Heart right ventricle (tissue), 16 donors: ENCODE measurements at regions of chr1 and their contacts with region 1.

Region 1: GRCh38 chr1:166875734-166876539 is at the start of gene TADA1:
- DNase-seq: peak; percentile 97 to 98
- ATAC-seq: peak; percentile 95 to 99 (median 98)
- H3K4me3 ChIP-seq: peak within 1 kb of the TSS; percentile 65 to 96 (median 85)
- H3K27ac ChIP-seq: peak within 1 kb of the TSS; percentile 90 to 96 (median 92)
- H3K4me1 ChIP-seq: peaks cover 1 to 40% (median 30%) of the 10 kb centered on the region in 9 donors
- H3K27me3 ChIP-seq: no peaks in the 10 kb centered on the region
- CTCF ChIP-seq: peak in 4 of 9 donors; percentile 16 to 55 (median 40)
- total RNA-seq, gene TADA1: 7.5 to 12.8 (median 9.2) TPM

Region 2: DNA sequence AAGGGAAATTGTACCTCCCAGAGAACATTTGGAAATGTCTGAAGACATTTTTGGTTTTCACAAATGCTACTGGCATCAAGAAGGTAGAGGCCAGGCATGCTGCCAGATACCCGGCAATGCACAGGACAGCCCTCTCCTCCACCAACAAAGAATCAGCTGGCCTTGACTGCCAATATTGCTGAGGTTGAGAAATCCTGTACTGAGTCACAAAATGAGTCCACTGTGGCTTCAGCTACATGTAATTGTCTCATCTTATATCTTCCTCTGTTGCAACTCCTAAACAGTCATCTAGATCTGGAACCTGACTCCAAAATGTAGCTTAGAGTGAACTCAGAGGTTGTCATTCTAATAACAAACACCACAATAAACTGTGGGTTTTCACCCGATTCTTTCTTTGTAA is 364.2 kb before region 1 on chr1:
- intact Hi-C with region 1: no loop called
- DNase-seq: no peak
- ATAC-seq: no peak
- H3K4me3 ChIP-seq: no peak overlapping the region
- H3K27ac ChIP-seq: no peak overlapping the region
- H3K4me1 ChIP-seq: no peaks in the 10 kb centered on the region
- H3K27me3 ChIP-seq: peaks cover 0 to 3% (median 0%) of the 10 kb centered on the region in 7 donors
- CTCF ChIP-seq: no peak

Region 3: GRCh38 chr1:166838766-166839599 is 37.0 kb before region 1 on chr1 and contains the start of gene POGK:
- intact Hi-C with region 1: loop called in 5 of 10 experiments (anchors 1 to 5 kb)
- DNase-seq: peak; percentile 92 to 93
- ATAC-seq: peak; percentile 95 to 99 (median 97)
- H3K4me3 ChIP-seq: peak within 1 kb of the TSS; percentile 44 to 84 (median 71)
- H3K27ac ChIP-seq: peak within 1 kb of the TSS; percentile 79 to 95 (median 90)
- H3K4me1 ChIP-seq: peaks cover 13 to 52% (median 51%) of the 10 kb centered on the region in 9 donors
- H3K27me3 ChIP-seq: no peaks in the 10 kb centered on the region
- CTCF ChIP-seq: peak in 2 of 9 donors; percentile 8 to 26
- total RNA-seq, gene POGK: 10.2 to 19.2 (median 13.7) TPM